ENCODE measurements at regions of chr7 and their contacts with region 1.

Region 1: GRCh38 chr7:151917791-151918509 is 38.3 kb upstream of the GALNTL5 start:
- H3K4me3 Mint-ChIP-seq: peak overlapping the region; percentile 39
- H3K27ac Mint-ChIP-seq: peak overlapping the region; percentile 85
- H3K4me1 Mint-ChIP-seq: peaks cover 68% of the 10 kb centered on the region
- H3K27me3 Mint-ChIP-seq: peaks cover 2% of the 10 kb centered on the region

Region 2: DNA sequence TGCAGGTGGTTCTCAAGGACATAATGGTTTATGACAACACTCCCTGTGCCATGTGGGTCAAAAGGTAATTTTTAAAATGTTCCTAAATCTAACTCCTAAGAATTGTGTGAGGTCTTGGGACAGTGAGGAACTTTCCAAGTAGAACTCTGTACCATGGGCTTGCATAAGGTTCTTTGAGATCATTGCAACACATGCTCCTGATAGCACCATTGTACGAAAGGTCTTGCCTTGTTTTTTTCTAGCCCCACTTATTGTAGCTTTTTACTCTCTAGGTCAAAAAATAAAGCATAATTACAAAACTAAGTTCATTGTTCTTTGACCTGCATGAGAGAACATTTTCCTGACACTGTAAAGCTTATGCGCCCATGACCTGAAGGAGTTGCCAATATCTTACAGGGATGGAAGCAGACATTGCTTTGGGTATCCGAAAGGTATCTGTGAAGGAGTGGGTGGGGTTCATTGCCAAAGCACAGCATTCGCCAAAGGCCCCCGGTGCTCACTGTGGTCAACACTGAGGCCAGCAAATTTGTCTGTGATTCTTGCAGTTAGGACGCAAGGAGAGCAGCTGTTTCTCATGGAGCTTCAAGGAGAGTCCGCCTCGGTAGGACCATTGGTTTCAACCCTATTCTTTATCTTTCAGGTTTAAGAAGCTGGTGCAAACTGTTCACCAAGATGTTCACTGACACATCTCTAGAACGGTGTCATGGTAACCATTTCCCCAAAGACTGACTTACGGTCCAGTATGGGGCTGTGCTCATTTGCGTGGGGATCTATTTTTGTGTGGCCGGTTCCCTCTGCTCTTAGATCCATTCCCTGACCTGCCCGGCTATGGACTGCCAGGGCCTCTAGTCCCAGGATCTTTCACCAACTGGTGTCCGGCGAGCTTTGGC is 33.4 kb before region 1 on chr7:
- intact Hi-C with region 1: loop called (anchors 2 kb)
- H3K4me3 Mint-ChIP-seq: no peak overlapping the region
- H3K27ac Mint-ChIP-seq: no peak overlapping the region
- H3K4me1 Mint-ChIP-seq: peaks cover 14% of the 10 kb centered on the region
- H3K27me3 Mint-ChIP-seq: peaks cover 16% of the 10 kb centered on the region